MCF 10A (cell line): ENCODE measurements at regions of chr14 and their contacts with region 1.

Region 1: GRCh38 chr14:66070509-66071319 is 415.5 kb upstream of the CCDC196 start:
- DNase-seq: peak; percentile 62
- H3K4me3 Mint-ChIP-seq: no peak overlapping the region
- H3K27ac Mint-ChIP-seq: no peak overlapping the region
- H3K4me1 Mint-ChIP-seq: peaks cover 15% of the 10 kb centered on the region
- H3K27me3 Mint-ChIP-seq: peaks cover 25% of the 10 kb centered on the region
- CTCF ChIP-seq: peak; percentile 84

Region 2: GRCh38 chr14:65356327-65356852 is 714.3 kb before region 1 on chr14:
- CTCF ChIA-PET with region 1: no interaction called
- POLR2A ChIA-PET with region 1: no interaction called
- intact Hi-C with region 1: no loop called
- DNase-seq: peak; percentile 99
- H3K4me3 Mint-ChIP-seq: peak overlapping the region; percentile 39
- H3K27ac Mint-ChIP-seq: peak overlapping the region; percentile 88
- H3K4me1 Mint-ChIP-seq: peaks cover 42% of the 10 kb centered on the region
- H3K27me3 Mint-ChIP-seq: no peaks in the 10 kb centered on the region
- CTCF ChIP-seq: no peak

Region 3: GRCh38 chr14:65958664-65959562 is 111.8 kb before region 1 on chr14:
- CTCF ChIA-PET with region 1: interaction called, 17 read pairs
- POLR2A ChIA-PET with region 1: no interaction called
- intact Hi-C with region 1: loop called (anchors 2 kb)
- DNase-seq: peak; percentile 50
- H3K4me3 Mint-ChIP-seq: no peak overlapping the region
- H3K27ac Mint-ChIP-seq: no peak overlapping the region
- H3K4me1 Mint-ChIP-seq: no peaks in the 10 kb centered on the region
- H3K27me3 Mint-ChIP-seq: peaks cover 6% of the 10 kb centered on the region
- CTCF ChIP-seq: peak; percentile 44

Region 4: GRCh38 chr14:66056926-66057552 is 13.7 kb before region 1 on chr14:
- CTCF ChIA-PET with region 1: interaction called, 12 read pairs
- POLR2A ChIA-PET with region 1: no interaction called
- intact Hi-C with region 1: no loop called
- DNase-seq: no peak
- H3K4me3 Mint-ChIP-seq: no peak overlapping the region
- H3K27ac Mint-ChIP-seq: no peak overlapping the region
- H3K4me1 Mint-ChIP-seq: no peaks in the 10 kb centered on the region
- H3K27me3 Mint-ChIP-seq: no peaks in the 10 kb centered on the region
- CTCF ChIP-seq: no peak